ENCODE measurements at regions of chr2 and their contacts with region 1.

Region 1: GRCh38 chr2:203763938-203764664 is 57.7 kb downstream of the CD28 start:
- DNase-seq: peak; percentile 18
- H3K4me3 Mint-ChIP-seq: no peak overlapping the region
- H3K27ac Mint-ChIP-seq: peak overlapping the region; percentile 88
- H3K4me1 Mint-ChIP-seq: peaks cover 56% of the 10 kb centered on the region
- H3K27me3 Mint-ChIP-seq: no peaks in the 10 kb centered on the region

Region 2: GRCh38 chr2:203751685-203752271 is 12.3 kb before region 1 on chr2:
- CTCF ChIA-PET with region 1: interaction called, 44 read pairs
- POLR2A ChIA-PET with region 1: interaction called, 4 read pairs
- DNase-seq: no peak
- H3K4me3 Mint-ChIP-seq: no peak overlapping the region
- H3K27ac Mint-ChIP-seq: no peak overlapping the region
- H3K4me1 Mint-ChIP-seq: peaks cover 39% of the 10 kb centered on the region
- H3K27me3 Mint-ChIP-seq: no peaks in the 10 kb centered on the region

Measured in activated CD4-positive, alpha-beta T cell treated with anti-CD3 and anti-CD28 coated beads, Interleukin-2, amount 10 ng/mL, durations not matched to agents 7 days and 5 days (primary cell).